ENCODE measurements at regions of chr14 and their contacts with region 1.

Region 1: DNA sequence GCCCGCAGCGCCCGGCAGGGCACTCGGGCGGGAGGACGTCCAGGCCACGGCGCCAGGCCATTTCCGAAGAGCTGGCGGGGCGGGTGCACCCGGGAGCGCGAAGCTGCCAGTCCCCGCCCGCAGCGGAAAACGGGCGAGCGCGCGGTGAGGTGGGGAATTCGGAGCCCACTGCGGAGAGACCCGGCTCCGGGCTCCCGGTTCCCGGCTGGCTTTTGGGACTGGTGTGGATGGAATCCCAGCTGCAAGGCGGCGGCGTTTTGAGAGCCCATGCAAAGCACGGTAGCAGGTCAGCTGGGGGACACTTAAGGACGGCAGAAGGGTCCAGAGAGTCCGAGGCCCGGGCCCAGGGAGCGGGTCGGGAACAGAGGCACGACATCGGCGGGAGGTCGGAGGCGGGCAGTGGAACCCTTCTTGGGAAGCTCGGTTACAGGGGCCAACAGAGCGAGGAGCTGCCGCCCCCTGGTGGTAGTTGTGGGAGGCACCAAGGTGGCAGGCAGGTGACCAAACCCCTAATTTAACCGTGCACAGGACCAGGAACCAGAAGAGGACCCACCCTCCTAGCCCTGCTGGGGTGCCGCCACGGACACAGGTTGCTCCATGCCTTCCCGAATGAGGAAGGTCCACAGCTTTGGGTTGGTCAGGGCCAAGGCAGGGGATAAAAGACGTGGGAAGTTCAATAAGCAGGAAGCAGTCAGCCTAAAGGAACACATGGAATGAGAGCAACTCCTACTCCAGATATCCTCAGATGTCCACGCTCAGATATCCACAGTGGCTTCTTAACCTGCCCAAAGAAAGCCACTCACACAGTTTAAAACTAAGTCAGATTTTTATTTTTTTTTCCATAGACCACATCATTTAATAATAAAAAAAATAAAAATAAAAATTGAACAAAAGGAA is 685 bp upstream of the CDH24 start:
- DNase-seq: peak; percentile 91
- ATAC-seq: peak; percentile 73
- H3K4me3 Mint-ChIP-seq: peak overlapping the region; percentile 76
- H3K27ac Mint-ChIP-seq: no peak overlapping the region
- H3K4me1 Mint-ChIP-seq: peaks cover 19% of the 10 kb centered on the region
- H3K27me3 Mint-ChIP-seq: peaks cover 7% of the 10 kb centered on the region
- CTCF ChIP-seq: peak; percentile 94

Region 2: GRCh38 chr14:22955702-22956569 is 102.1 kb before region 1 on chr14:
- CTCF ChIA-PET with region 1: interaction called, 13 read pairs
- POLR2A ChIA-PET with region 1: no interaction called
- intact Hi-C with region 1: no loop called
- DNase-seq: no peak
- ATAC-seq: no peak
- H3K4me3 Mint-ChIP-seq: peak overlapping the region; percentile 93
- H3K27ac Mint-ChIP-seq: peak overlapping the region; percentile 93
- H3K4me1 Mint-ChIP-seq: peaks cover 25% of the 10 kb centered on the region
- H3K27me3 Mint-ChIP-seq: no peaks in the 10 kb centered on the region
- CTCF ChIP-seq: no peak

Region 3: DNA sequence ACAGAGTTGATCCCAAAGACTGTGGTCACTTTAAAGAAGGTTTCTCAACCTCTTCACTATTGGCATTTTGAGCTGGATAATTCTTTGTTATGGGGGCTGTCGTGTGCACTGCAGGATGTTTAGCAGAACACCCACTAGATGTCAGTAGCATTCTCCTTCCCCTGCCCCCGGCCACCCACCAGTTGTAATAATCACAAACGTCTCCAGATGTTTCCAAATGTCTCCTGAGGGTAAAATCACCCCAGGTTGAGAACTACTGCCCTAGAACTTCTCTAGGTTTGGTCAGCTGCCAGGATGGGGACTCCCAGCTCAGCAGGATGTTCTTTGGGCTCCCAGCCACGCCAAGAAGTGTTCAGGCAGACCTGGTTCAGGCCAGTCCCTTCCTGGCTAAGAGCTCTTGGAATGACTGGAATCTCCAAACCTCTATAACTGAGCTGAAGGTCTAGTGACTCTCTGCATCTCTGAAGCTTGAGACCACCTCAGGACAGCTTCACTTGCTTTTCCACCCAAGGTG is 63.2 kb before region 1 on chr14:
- CTCF ChIA-PET with region 1: interaction called, 518 read pairs
- POLR2A ChIA-PET with region 1: interaction called, 17 read pairs
- intact Hi-C with region 1: loop called (anchors 1 kb)
- DNase-seq: peak; percentile 57
- ATAC-seq: peak; percentile 94
- H3K4me3 Mint-ChIP-seq: no peak overlapping the region
- H3K27ac Mint-ChIP-seq: no peak overlapping the region
- H3K4me1 Mint-ChIP-seq: peaks cover 3% of the 10 kb centered on the region
- H3K27me3 Mint-ChIP-seq: no peaks in the 10 kb centered on the region
- CTCF ChIP-seq: peak; percentile 59

Region 4: DNA sequence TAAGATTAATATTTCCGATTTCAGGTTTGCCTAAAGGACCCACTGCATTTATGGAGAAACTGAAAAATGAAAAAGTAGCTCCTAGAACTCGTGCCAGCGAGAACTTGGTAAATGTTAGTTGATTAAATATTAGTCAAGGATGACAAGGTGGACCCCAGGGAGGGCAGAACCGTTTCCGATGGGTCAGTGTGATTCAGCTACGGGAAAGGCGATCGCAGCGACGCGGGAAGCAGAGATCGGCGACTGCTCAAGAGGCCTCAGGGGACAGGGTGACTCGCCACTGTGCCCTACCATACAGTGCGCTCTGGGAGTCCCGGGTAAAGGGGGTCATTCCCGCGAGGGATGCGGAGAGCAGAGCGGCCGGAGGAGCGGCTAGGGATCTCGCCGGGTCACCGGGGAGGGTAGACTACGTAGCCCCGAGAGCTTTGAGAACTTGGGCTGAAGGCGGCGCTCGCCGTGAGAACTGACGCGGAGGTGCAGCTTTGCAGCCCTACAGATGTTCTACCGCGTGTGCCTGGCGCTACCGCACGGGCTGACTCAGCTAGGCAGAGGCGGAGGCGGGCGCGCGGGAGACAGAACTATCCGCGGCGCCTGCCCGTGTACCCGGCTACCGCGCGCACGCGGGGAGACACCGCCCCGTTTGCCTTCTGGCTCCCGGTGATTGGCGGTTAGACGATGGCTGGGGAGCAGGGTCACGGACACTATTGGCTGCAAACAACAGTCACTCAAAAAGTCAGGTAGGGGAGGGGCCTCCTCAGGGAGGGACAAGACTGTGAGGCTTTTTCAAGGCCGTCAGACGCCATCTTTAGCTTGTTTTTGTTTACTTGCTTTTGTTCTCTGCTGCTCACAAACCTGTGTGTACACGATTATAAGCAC is 51.2 kb before region 1 on chr14:
- CTCF ChIA-PET with region 1: interaction called, 46 read pairs
- POLR2A ChIA-PET with region 1: interaction called, 14 read pairs
- intact Hi-C with region 1: loop called (anchors 5 kb)
- DNase-seq: peak; percentile 98
- ATAC-seq: peak; percentile 96
- H3K4me3 Mint-ChIP-seq: peak overlapping the region; percentile 91
- H3K27ac Mint-ChIP-seq: peak overlapping the region; percentile 97
- H3K4me1 Mint-ChIP-seq: peaks cover 34% of the 10 kb centered on the region
- H3K27me3 Mint-ChIP-seq: no peaks in the 10 kb centered on the region
- CTCF ChIP-seq: peak; percentile 39

Region 5: GRCh38 chr14:23041729-23042128 is 16.3 kb before region 1 on chr14:
- CTCF ChIA-PET with region 1: interaction called, 15 read pairs
- POLR2A ChIA-PET with region 1: interaction called, 3 read pairs
- intact Hi-C with region 1: no loop called
- DNase-seq: no peak
- ATAC-seq: no peak
- H3K4me3 Mint-ChIP-seq: no peak overlapping the region
- H3K27ac Mint-ChIP-seq: no peak overlapping the region
- H3K4me1 Mint-ChIP-seq: peaks cover 1% of the 10 kb centered on the region
- H3K27me3 Mint-ChIP-seq: no peaks in the 10 kb centered on the region
- CTCF ChIP-seq: no peak

Region 6: GRCh38 chr14:23095196-23096108 is 37.4 kb after region 1 on chr14 and contains the start of gene C14orf119:
- CTCF ChIA-PET with region 1: interaction called, 18 read pairs
- POLR2A ChIA-PET with region 1: no interaction called
- intact Hi-C with region 1: no loop called
- DNase-seq: peak; percentile 100
- ATAC-seq: peak; percentile 91
- H3K4me3 Mint-ChIP-seq: no peak within 1 kb of the TSS
- H3K27ac Mint-ChIP-seq: no peak within 1 kb of the TSS
- H3K4me1 Mint-ChIP-seq: peaks cover 34% of the 10 kb centered on the region
- H3K27me3 Mint-ChIP-seq: no peaks in the 10 kb centered on the region
- CTCF ChIP-seq: no peak
- total RNA-seq, gene C14orf119: 49.2 to 51.1 TPM

Region 7: DNA sequence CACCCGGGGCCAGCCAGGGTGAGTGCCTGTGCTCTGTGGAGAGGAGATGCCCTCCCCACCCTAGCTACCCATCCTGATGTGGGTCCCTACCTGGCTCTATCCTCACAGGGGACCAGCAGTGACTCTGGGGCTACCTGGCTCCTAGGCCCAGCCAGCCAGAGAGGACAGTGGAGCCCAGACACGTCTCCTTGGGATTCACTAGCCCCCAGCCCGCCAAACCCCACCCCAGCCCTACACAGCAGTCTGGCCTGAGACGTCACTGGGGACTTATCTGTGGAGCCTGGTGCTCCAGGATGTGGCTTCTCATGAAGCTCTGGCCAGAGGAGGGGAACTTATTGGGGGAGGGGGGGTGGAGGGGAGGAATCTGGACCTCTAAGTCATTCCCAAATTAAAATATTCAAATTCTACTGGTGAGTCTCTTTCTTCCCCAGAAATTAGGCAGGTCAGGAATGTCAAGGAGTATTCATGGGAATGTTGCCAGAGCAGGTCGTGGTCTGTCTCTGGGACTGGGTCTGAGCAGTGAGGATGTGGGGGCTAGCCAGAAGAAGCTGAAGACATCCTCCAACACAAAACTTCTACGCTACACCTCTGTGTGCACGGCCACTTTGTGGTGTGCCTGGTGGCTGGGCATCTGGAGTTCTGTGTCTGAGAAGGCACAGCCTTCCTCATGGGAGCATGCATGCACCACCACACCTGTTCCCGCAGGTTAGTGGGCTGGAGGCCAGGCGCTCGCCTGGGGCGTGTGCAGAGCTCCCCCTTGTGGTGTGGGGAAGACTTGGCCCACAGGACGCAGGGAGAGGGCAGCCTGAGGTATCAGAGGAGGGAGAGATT is 321.6 kb after region 1 on chr14:
- CTCF ChIA-PET with region 1: no interaction called
- POLR2A ChIA-PET with region 1: no interaction called
- intact Hi-C with region 1: no loop called
- DNase-seq: peak; percentile 67
- ATAC-seq: peak; percentile 93
- H3K4me3 Mint-ChIP-seq: no peak overlapping the region
- H3K27ac Mint-ChIP-seq: no peak overlapping the region
- H3K4me1 Mint-ChIP-seq: no peaks in the 10 kb centered on the region
- H3K27me3 Mint-ChIP-seq: no peaks in the 10 kb centered on the region
- CTCF ChIP-seq: peak; percentile 91